Naive thymus-derived CD4-positive, alpha-beta T cell (primary cell): ENCODE measurements at regions of chr10 and their contacts with region 1.

Region 1: GRCh38 chr10:79292891-79293746 is 54.1 kb upstream of the PPIF start:
- DNase-seq: peak in 2 of 9 donors; percentile 10 to 25
- ATAC-seq: peak; percentile 57
- H3K4me3 ChIP-seq: no peak overlapping the region
- H3K4me3 Mint-ChIP-seq: no peak overlapping the region
- H3K27ac ChIP-seq: no peak overlapping the region
- H3K27ac Mint-ChIP-seq: no peak overlapping the region
- H3K4me1 ChIP-seq: no peaks in the 10 kb centered on the region
- H3K4me1 Mint-ChIP-seq: peaks cover 0 to 40% (median 5%) of the 10 kb centered on the region in 7 donors
- H3K27me3 ChIP-seq: no peaks in the 10 kb centered on the region
- H3K27me3 Mint-ChIP-seq: no peaks in the 10 kb centered on the region

Region 2: DNA sequence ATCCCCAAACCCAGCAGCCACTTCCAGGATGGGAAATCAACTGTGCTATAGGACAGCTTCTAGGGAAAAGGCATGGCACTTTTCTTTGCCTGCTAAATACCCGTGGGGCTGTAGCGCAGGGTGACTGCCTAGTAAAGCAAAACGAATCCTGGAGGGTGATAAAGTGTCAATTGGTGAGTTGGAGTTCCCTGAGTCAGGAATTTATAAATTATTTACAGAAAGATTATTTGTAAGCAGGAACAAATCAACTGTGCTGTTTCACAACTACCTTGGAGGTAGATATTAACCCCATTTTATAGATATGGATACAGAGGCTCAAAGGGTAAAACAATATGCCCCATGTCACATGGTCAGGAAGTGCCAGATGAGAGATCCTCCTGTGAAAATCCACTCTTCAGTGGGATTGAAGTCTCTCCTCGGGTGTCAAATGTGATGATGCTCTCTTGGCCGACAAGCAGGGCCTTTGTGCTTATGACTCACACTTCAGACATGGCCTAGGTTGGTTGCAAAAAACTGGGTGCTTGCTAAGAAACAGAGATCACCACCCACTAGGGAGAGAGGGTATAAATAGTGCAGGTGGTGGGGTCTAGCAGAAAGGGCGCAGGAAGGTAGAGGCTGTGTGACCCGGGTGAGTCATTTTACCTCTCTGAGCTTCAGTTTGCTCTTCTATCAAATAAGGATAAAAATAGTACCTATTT is 607.5 kb before region 1 on chr10:
- CTCF ChIA-PET with region 1: no interaction called
- POLR2A ChIA-PET with region 1: no interaction called
- intact Hi-C with region 1: no loop called
- DNase-seq: no peak
- ATAC-seq: no peak
- H3K4me3 ChIP-seq: no peak overlapping the region
- H3K4me3 Mint-ChIP-seq: no peak overlapping the region
- H3K27ac ChIP-seq: no peak overlapping the region
- H3K27ac Mint-ChIP-seq: no peak overlapping the region
- H3K4me1 ChIP-seq: no peaks in the 10 kb centered on the region
- H3K4me1 Mint-ChIP-seq: no peaks in the 10 kb centered on the region
- H3K27me3 ChIP-seq: no peaks in the 10 kb centered on the region
- H3K27me3 Mint-ChIP-seq: peaks cover 0 to 13% (median 8%) of the 10 kb centered on the region in 5 donors

Region 3: DNA sequence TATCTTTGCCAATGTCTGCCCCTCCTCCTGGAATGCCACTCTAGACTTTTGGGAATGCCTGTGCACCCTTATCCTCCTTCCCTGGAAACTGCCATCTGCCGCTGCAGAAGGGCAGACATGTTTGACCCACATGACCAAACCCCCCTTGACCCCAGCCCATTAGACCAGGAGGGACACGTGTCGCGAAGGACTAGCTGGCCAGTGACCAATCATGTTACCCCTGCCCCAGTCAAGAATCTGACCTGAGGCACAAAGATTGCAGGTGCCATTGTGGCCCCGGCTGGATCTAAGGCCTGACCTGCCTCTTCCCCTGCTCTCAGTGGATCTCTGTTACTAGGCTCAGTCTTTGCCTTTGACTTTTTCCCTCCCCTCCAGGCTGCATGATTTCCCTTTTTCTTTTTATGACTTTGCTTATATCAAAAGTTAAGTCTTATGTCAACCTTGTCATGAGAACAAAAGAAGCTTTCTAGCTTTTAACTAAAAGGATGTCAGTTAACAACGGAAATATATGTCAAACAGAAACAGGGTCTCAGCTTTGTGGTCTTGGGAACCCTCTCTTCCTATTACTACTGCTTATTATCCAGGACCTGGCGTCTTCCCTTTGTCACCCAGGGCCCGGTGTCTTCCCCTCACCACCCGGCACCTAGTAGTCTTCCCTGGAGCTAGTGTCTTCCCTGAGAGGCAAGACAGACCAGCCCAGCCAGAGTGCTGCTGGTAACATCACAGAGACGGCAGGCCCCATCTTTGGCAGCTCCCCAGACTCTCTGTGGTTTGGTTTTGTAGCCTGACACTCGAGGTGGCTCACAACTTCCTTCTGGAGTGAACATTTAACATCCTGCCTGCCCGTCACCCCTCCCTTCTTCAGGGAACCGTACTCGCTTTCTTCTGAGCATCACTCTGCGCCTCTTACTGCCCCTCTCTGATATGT is 29.8 kb after region 1 on chr10:
- CTCF ChIA-PET with region 1: interaction called, 4 read pairs
- POLR2A ChIA-PET with region 1: no interaction called
- intact Hi-C with region 1: loop called in 1 of 2 experiments (anchors 2 kb)
- DNase-seq: peak; percentile 53 to 92 (median 90)
- ATAC-seq: peak; percentile 90
- H3K4me3 ChIP-seq: peak overlapping the region; percentile 20
- H3K4me3 Mint-ChIP-seq: peak overlapping the region; percentile 70 to 88 (median 80)
- H3K27ac ChIP-seq: peak overlapping the region; percentile 65
- H3K27ac Mint-ChIP-seq: peak overlapping the region; percentile 77 to 99 (median 94)
- H3K4me1 ChIP-seq: peaks cover 58 to 63% of the 10 kb centered on the region in 2 donors
- H3K4me1 Mint-ChIP-seq: peaks cover 50 to 74% (median 68%) of the 10 kb centered on the region in 7 donors
- H3K27me3 ChIP-seq: no peaks in the 10 kb centered on the region
- H3K27me3 Mint-ChIP-seq: no peaks in the 10 kb centered on the region

Region 4: GRCh38 chr10:79374312-79375191 is 81.4 kb after region 1 on chr10:
- CTCF ChIA-PET with region 1: interaction called, 3 read pairs
- POLR2A ChIA-PET with region 1: no interaction called
- intact Hi-C with region 1: loop called in 1 of 2 experiments (anchors 1 kb)
- DNase-seq: peak; percentile 39 to 78 (median 67)
- ATAC-seq: peak; percentile 85
- H3K4me3 ChIP-seq: no peak overlapping the region
- H3K4me3 Mint-ChIP-seq: no peak overlapping the region
- H3K27ac ChIP-seq: no peak overlapping the region
- H3K27ac Mint-ChIP-seq: peak overlapping the region in 1 of 9 donors; percentile 42
- H3K4me1 ChIP-seq: peaks cover 0 to 5% of the 10 kb centered on the region in 2 donors
- H3K4me1 Mint-ChIP-seq: peaks cover 0 to 11% (median 4%) of the 10 kb centered on the region in 7 donors
- H3K27me3 ChIP-seq: no peaks in the 10 kb centered on the region
- H3K27me3 Mint-ChIP-seq: peaks cover 0 to 30% (median 0%) of the 10 kb centered on the region in 5 donors